Naive thymus-derived CD4-positive, alpha-beta T cell (primary cell): ENCODE measurements at regions of chr1 and their contacts with region 1.

Region 1: GRCh38 chr1:206563367-206564207 is 48.7 kb downstream of the EIF2D start:
- DNase-seq: no peak
- ATAC-seq: peak; percentile 6
- H3K4me3 ChIP-seq: peak overlapping the region; percentile 44
- H3K4me3 Mint-ChIP-seq: peak overlapping the region; percentile 77 to 99 (median 87)
- H3K27ac ChIP-seq: peak overlapping the region; percentile 90
- H3K27ac Mint-ChIP-seq: peak overlapping the region; percentile 86 to 100 (median 92)
- H3K4me1 ChIP-seq: peaks cover 88 to 90% of the 10 kb centered on the region in 2 donors
- H3K4me1 Mint-ChIP-seq: peaks cover 75 to 96% (median 91%) of the 10 kb centered on the region in 7 donors
- H3K27me3 ChIP-seq: no peaks in the 10 kb centered on the region
- H3K27me3 Mint-ChIP-seq: no peaks in the 10 kb centered on the region

Region 2: GRCh38 chr1:206551986-206552326 is 11.6 kb before region 1 on chr1:
- CTCF ChIA-PET with region 1: interaction called, 22 read pairs
- POLR2A ChIA-PET with region 1: interaction called, 722 read pairs
- intact Hi-C with region 1: loop called (anchors 1 kb)
- DNase-seq: peak; percentile 44 to 87 (median 80)
- ATAC-seq: peak; percentile 93
- H3K4me3 ChIP-seq: peak overlapping the region; percentile 9
- H3K4me3 Mint-ChIP-seq: peak overlapping the region; percentile 5 to 82 (median 72)
- H3K27ac ChIP-seq: peak overlapping the region; percentile 69
- H3K27ac Mint-ChIP-seq: peak overlapping the region; percentile 86 to 98 (median 92)
- H3K4me1 ChIP-seq: peaks cover 51% of the 10 kb centered on the region in 2 donors
- H3K4me1 Mint-ChIP-seq: peaks cover 46 to 71% (median 54%) of the 10 kb centered on the region in 7 donors
- H3K27me3 ChIP-seq: no peaks in the 10 kb centered on the region
- H3K27me3 Mint-ChIP-seq: no peaks in the 10 kb centered on the region

Region 3: DNA sequence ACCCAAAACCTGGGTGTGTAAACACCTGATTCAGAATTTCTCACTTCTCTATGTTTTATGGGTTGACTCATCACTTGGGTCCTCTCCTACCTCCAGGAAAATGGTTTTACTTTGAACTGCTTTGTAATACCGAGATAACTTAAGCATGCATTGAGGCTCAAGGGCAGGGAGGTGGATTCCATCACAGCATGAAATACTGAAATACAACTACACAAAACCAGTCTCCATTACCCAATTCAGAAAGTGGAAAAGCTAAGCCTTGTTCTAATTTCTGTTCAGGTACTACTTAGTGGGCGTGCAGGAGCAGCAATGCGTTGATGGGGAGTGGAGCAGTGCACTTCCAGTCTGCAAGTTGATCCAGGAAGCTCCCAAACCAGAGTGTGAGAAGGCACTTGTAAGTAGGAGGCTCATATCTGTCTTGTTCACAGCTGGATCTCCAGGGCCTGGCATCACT is 534.3 kb after region 1 on chr1:
- CTCF ChIA-PET with region 1: no interaction called
- POLR2A ChIA-PET with region 1: no interaction called
- intact Hi-C with region 1: no loop called
- DNase-seq: peak in 1 of 9 donors; percentile 40
- ATAC-seq: no peak
- H3K4me3 ChIP-seq: no peak overlapping the region
- H3K4me3 Mint-ChIP-seq: peak overlapping the region in 1 of 10 donors; percentile 28
- H3K27ac ChIP-seq: no peak overlapping the region
- H3K27ac Mint-ChIP-seq: peak overlapping the region in 1 of 9 donors; percentile 60
- H3K4me1 ChIP-seq: no peaks in the 10 kb centered on the region
- H3K4me1 Mint-ChIP-seq: peaks cover 0 to 21% (median 0%) of the 10 kb centered on the region in 7 donors
- H3K27me3 ChIP-seq: no peaks in the 10 kb centered on the region
- H3K27me3 Mint-ChIP-seq: peaks cover 0 to 11% (median 7%) of the 10 kb centered on the region in 5 donors